ENCODE measurements at regions of chr2 and their contacts with region 1.

Region 1: DNA sequence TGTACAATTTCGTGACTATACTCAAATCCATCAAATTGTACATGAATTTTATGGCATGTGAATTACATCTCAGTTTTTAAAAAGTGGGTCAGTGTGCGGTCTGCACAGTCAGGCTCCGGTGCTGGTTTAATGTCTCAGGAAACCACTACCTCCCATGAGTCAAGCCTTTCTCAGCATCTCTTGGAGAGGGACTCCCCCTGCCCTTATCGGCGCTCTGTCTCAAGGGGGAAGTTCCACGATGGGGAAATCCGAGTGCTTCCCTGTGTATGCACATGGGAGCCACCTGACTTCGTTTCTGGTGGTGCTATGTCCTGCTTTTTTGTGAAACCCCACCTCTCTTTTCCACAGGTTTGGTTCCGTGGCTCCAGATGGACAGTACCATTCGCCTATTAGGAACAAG is 72.5 kb downstream of the ACOXL start:
- DNase-seq: no peak
- H3K4me3 ChIP-seq: no peak overlapping the region
- H3K4me1 ChIP-seq: no peaks in the 10 kb centered on the region
- H3K27me3 ChIP-seq: no peaks in the 10 kb centered on the region

Region 2: GRCh38 chr2:111120253-111121027 is 315.5 kb after region 1 on chr2 and contains the start of gene BCL2L11:
- in situ Hi-C with region 1: loop called (anchors 25 kb)
- DNase-seq: peak; percentile 84 to 93
- H3K4me3 ChIP-seq: peak within 1 kb of the TSS; percentile 87
- H3K4me1 ChIP-seq: peaks cover 7% of the 10 kb centered on the region; the same call in 1 of the 2 replicates
- H3K27me3 ChIP-seq: peaks cover 15% of the 10 kb centered on the region

Region 3: DNA sequence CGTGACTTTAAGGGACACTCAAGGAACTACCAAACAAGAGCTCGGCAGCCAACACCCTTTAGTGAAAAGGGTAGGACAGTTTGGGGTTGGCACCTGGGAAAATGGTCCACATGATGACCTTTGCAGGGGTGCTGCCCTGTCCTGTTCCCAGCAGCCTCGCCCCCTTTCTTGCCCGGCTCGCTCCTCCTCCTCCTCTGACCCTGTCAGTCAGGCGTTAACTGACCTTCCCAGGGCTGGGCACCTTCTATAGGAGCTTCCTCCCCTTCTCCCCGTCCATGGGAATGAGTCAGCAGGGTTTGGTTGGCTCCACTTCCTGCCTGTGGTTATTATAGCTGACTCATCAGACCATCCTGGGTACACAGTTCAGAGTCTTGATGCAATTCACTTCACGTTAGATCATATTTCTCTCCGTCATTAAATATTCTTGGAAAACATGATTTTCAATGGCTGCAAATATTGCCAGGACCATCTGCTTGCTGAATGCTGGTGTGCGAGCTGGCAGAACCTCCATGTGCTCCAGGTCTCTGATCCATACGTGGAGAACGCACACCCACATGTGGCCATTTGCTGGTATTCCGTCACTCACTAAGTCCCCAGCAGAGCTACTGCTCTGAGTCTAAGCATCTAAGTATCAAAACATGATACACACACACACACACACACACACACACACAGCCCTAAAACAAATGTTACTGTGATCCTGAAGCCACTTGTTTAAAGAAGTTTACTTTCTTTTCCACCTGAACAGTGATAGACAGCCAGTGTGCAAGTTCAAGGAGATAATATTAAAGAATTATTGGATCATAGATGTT is 894.0 kb after region 1 on chr2:
- in situ Hi-C with region 1: loop called (anchors 25 kb)
- DNase-seq: peak in 1 of 2 experiments; percentile 14
- H3K4me3 ChIP-seq: no peak overlapping the region
- H3K4me1 ChIP-seq: no peaks in the 10 kb centered on the region
- H3K27me3 ChIP-seq: no peaks in the 10 kb centered on the region

Measured in HAP-1 (cell line).